ENCODE measurements at regions of chr1 and their contacts with region 1.

Region 1: DNA sequence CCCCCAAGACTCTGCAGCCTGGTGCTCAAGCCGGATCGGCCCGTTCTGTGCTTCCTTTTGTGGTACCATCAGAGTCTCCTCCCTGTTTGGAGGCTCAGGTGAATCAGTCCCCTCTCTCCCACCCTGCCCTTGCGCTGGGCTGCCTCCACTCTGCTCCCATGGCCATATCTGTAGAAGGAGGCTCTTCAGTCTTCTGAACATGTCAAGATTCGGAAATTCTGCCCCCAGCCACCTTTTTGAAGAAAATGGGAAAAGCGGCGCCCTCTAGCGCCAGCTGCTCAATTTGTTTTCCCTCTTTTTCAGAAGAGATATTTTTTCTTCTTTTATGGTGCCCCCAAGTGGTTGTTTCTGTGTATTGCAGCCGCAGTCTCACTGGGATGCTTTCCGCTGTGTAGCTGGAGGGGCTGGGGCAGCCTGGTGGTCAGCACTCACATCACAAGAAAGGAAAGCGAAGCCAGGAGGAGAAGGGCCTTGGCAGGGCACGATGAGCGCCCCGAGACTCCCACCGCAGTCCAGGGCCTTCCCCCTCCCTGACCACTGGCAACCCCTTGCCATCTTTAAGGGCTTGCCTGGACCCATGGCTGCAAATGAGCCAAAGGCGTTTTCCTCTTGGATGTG is 58.4 kb upstream of the CACNA1E start:
- DNase-seq: peak; percentile 78
- ATAC-seq: peak; percentile 82
- H3K4me3 ChIP-seq: no peak overlapping the region
- H3K27ac ChIP-seq: no peak overlapping the region
- H3K4me1 ChIP-seq: no peaks in the 10 kb centered on the region
- H3K27me3 ChIP-seq: peaks cover 16% of the 10 kb centered on the region
- CTCF ChIP-seq: peak; percentile 99

Region 2: DNA sequence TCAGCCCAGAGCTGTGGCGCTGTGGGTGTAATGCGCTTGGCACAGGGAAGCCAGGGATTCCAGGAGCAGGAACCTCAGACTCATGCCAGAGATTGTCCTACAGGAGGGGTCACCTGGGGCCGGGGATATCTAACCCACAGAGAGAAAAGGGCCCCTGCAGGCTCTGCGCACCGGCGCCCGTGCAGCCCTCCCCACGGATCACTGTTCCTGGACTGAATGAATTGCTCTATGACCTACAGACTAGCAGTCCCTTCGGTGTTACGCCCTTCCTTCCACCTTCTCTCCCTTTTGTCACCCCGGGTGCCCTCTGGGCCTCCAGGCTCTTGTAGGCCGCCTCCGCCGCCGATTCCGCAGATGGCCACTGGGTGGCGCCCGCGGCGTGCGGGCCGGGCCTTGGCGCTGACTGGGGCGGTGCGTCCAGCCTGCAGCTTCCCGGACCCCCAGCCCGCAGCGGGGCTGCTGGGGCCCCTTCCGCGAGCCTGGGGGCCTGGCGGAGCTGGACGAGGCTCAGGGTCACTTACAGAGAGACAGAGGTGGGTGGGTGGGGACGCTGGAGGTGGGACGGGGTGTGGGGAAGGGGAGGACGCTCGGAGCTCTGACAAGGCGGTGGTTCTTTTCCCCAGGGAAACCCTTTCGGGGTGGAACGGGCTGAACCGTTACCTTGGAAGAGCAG is 235.1 kb before region 1 on chr1:
- intact Hi-C with region 1: loop called (anchors 5 kb)
- DNase-seq: peak; percentile 81
- ATAC-seq: peak; percentile 93
- H3K4me3 ChIP-seq: no peak overlapping the region
- H3K27ac ChIP-seq: no peak overlapping the region
- H3K4me1 ChIP-seq: no peaks in the 10 kb centered on the region
- H3K27me3 ChIP-seq: no peaks in the 10 kb centered on the region
- CTCF ChIP-seq: peak; percentile 94

Region 3: GRCh38 chr1:181704546-181704945 is 279.7 kb after region 1 on chr1:
- intact Hi-C with region 1: no loop called
- DNase-seq: no peak
- ATAC-seq: no peak
- H3K4me3 ChIP-seq: no peak overlapping the region
- H3K27ac ChIP-seq: no peak overlapping the region
- H3K4me1 ChIP-seq: no peaks in the 10 kb centered on the region
- H3K27me3 ChIP-seq: no peaks in the 10 kb centered on the region
- CTCF ChIP-seq: no peak

Measured in upper lobe of right lung (tissue), 1 donor.